Aorta (tissue), 5 donors: ENCODE measurements at regions of chr3 and their contacts with region 1.

Region 1: GRCh38 chr3:127103080-127103479 is 89.9 kb upstream of the PRR23E start:
- DNase-seq: no peak
- ATAC-seq: no peak
- H3K4me3 ChIP-seq: no peak overlapping the region
- H3K27ac ChIP-seq: no peak overlapping the region
- H3K4me1 ChIP-seq: no peaks in the 10 kb centered on the region
- H3K27me3 ChIP-seq: no peaks in the 10 kb centered on the region

Region 2: GRCh38 chr3:126835898-126836860 is 266.9 kb before region 1 on chr3:
- intact Hi-C with region 1: no loop called
- DNase-seq: no peak
- ATAC-seq: peak; percentile 26
- H3K4me3 ChIP-seq: no peak overlapping the region
- H3K27ac ChIP-seq: no peak overlapping the region
- H3K4me1 ChIP-seq: no peaks in the 10 kb centered on the region
- H3K27me3 ChIP-seq: no peaks in the 10 kb centered on the region

Region 3: DNA sequence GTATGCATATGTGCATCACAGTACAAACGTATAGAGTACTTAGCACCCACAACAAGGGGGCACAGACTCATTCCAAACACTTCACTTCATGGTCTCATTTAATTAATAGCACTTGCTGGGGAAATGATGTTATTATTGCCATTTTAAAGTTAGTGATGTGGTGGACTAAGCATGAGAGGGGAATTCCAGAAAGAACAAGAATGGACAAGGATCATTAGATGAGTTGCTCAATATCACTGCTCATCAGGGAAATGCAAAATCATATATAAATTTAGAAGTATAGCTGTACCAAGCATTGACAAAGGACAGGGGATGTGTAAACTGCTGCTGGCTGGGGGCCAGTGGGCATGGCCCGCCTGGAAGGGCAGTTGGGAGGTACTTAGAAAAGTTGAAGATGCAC is 170.1 kb after region 1 on chr3:
- intact Hi-C with region 1: loop called in 1 of 2 experiments (anchors 5 kb)
- DNase-seq: no peak
- ATAC-seq: no peak
- H3K4me3 ChIP-seq: no peak overlapping the region
- H3K27ac ChIP-seq: no peak overlapping the region
- H3K4me1 ChIP-seq: no peaks in the 10 kb centered on the region
- H3K27me3 ChIP-seq: peaks cover 0 to 2% of the 10 kb centered on the region in 2 donors